Endothelial cell of umbilical vein (primary cell): ENCODE measurements at regions of chr4 and their contacts with region 1.

Region 1: DNA sequence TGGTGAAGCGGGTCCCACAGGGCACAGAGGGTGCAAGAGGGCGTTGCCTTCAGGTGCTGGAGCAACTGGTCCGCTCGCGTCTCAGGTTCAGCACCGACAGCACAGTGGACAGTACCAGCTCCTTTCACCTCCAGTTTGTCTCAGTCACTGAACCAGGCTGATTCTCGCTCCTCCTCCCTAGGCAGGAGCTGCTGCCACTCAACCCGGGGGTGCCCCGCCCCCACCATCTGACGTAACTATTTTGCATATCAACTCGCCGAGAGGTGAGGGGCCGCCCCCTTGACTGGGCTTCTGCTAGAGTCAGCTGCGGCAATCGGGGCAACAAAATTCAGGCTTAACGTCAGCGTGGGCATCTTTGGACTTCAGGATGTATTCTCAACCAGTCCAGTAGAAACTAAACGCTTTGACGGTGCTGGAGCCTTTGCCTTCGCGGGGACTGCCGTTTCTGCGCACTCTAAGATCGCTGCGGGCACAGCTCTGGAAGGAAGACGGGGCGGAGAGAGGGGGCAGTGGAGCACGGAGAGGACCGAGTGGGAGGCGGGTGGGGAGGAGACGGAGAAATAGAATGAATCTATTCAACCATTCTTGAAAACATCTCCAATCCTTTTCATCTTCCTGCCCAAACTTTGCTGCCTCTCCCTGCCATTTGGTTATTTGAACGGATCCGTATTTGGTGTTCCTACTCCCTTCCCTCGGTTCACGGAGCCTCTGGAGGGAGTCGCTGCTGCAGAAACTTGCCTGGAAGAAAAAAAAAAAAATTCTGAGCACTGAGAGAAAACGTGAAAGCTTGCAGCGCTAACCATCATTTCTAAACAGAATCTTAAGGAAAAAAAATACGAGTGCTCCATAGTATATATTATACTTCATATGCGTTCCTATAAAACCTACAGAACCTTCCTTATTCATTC is at the start of gene FSTL5:
- DNase-seq: peak; percentile 82
- H3K4me3 ChIP-seq: peak within 1 kb of the TSS; percentile 4 to 82 (median 79)
- H3K27ac ChIP-seq: peak within 1 kb of the TSS; percentile 5
- H3K4me1 ChIP-seq: peaks cover 13% of the 10 kb centered on the region
- H3K27me3 ChIP-seq: peaks cover 0 to 1% of the 10 kb centered on the region in 2 experiments
- CTCF ChIP-seq: no peak
- POLR2A ChIP-seq: peak; percentile 52
- total RNA-seq, gene FSTL5: 1.3 and 1.6 TPM in 2 replicates

Region 2: DNA sequence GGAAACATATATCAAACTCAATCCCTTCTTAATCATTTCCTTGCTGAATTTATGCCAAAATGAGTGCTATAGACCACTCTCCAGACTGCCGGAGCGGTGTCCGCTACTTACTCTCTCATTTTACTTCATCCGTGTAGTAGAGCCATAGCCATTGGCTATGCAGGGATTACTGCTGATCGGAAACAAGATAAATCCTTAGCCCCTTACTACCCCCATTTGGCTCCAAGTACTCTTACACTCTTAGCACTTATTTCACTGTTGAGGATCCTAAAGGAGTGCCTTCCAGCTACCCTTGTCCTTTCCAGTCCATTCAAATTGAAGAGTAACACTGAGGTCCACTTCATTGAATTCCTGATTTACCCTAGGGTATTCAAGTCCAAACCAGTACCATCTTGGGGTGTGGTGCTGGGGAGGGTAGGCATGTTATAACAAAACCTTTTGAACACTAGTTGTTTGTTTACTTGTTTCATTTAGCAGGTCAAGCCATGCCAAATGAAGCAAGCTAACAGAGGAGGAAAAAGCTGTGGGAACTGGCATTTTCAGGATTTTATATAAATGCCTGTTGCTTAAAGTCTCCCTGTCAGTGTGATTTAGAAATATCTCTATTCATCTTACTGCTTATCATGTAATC is 715.4 kb before region 1 on chr4:
- CTCF ChIA-PET with region 1: no interaction called
- POLR2A ChIA-PET with region 1: no interaction called
- dilution Hi-C with region 1: no loop called
- intact Hi-C with region 1: loop called (anchors 5 kb)
- DNase-seq: peak; percentile 75
- H3K4me3 ChIP-seq: peak overlapping the region in 1 of 3 experiments; percentile 55
- H3K27ac ChIP-seq: no peak overlapping the region
- H3K4me1 ChIP-seq: peaks cover 2% of the 10 kb centered on the region
- H3K27me3 ChIP-seq: no peaks in the 10 kb centered on the region
- CTCF ChIP-seq: no peak
- POLR2A ChIP-seq: no peak

Region 3: DNA sequence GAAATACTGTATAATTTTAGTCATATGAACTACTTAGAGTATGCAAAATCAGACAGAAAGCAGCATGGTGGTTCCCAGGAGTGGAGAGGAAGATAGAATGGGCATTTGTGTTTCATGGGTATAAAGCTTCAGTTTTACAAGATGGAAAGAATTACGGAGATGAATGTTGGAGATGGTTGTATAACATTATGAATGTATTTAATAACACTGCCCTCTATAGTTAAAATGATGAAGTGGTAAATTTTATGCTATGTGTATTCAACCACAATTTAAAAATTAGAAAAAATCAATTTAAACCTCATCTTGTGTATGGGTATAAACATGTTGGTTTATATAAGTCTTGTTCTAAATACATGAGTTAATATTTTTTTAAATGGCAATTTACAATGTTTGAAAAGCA is 521.4 kb before region 1 on chr4:
- CTCF ChIA-PET with region 1: interaction called, 8 read pairs
- POLR2A ChIA-PET with region 1: no interaction called
- dilution Hi-C with region 1: no loop called
- intact Hi-C with region 1: loop called (anchors 5 kb)
- DNase-seq: peak; percentile 67
- H3K4me3 ChIP-seq: peak overlapping the region in 1 of 3 experiments; percentile 54
- H3K27ac ChIP-seq: no peak overlapping the region
- H3K4me1 ChIP-seq: peaks cover 8% of the 10 kb centered on the region
- H3K27me3 ChIP-seq: no peaks in the 10 kb centered on the region
- CTCF ChIP-seq: peak in 1 of 2 donors; percentile 10
- POLR2A ChIP-seq: no peak

Region 4: GRCh38 chr4:161936625-161937133 is 227.4 kb before region 1 on chr4:
- CTCF ChIA-PET with region 1: interaction called, 4 read pairs
- POLR2A ChIA-PET with region 1: no interaction called
- dilution Hi-C with region 1: no loop called
- intact Hi-C with region 1: loop called (anchors 1 kb)
- DNase-seq: peak; percentile 91
- H3K4me3 ChIP-seq: no peak overlapping the region
- H3K27ac ChIP-seq: peak overlapping the region; percentile 74
- H3K4me1 ChIP-seq: peaks cover 37% of the 10 kb centered on the region
- H3K27me3 ChIP-seq: no peaks in the 10 kb centered on the region
- CTCF ChIP-seq: no peak
- POLR2A ChIP-seq: no peak

Region 5: GRCh38 chr4:162104459-162105124 is 59.5 kb before region 1 on chr4:
- CTCF ChIA-PET with region 1: no interaction called
- POLR2A ChIA-PET with region 1: no interaction called
- dilution Hi-C with region 1: no loop called
- intact Hi-C with region 1: no loop called
- DNase-seq: no peak
- H3K4me3 ChIP-seq: no peak overlapping the region
- H3K27ac ChIP-seq: no peak overlapping the region
- H3K4me1 ChIP-seq: no peaks in the 10 kb centered on the region
- H3K27me3 ChIP-seq: no peaks in the 10 kb centered on the region
- CTCF ChIP-seq: no peak
- POLR2A ChIP-seq: no peak